Dendritic cell treated with granulocyte-macrophage colony-stimulating factor and Interleukin-4, amounts not matched to agents 40 ng/mL and 50 ng/mL, for 4 days (primary cell): ENCODE measurements at regions of chr2 and their contacts with region 1.

Region 1: DNA sequence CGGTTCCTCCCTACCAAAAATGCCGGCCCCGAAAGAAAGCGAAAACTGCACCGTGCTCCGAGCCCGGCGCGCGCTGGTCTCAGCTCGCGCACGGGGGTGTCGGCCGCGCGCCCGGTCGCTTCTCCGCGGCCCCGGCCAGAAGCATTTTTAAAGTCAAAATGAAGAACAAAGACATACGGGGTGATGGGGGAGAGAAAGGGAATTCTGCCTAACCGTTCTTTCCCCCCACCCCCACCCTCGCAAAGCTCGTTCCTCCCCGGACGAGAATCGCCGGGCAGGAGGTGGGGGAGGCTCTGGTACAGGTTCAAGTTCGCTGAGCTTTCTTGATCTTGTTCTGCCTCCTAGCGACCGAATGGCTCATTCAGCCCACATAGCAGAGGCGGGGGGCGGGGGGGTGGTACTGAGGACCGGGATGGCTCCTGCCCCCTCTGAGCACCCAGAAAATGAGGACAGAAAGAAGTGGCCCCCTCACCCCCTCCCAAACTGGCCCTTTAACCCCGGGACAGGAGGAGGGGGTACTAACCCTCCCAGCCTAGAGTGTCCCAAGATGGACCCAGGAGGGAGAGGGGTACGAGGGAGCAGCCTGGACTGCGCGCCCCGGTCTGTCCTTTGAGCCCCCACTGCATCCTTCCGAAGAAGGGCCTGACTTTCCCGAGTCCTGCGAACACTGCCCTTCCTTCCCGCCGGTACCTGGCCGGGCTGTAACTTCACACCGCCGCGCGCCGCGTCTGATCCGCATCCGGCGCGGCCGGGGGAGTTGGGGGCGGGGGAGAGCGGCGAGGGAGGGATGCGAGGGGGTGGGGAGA is 3.1 kb downstream of the BCL11A start:
- H3K4me3 Mint-ChIP-seq: peak overlapping the region; percentile 94
- H3K27ac Mint-ChIP-seq: peak overlapping the region; percentile 88
- H3K4me1 Mint-ChIP-seq: peaks cover 47% of the 10 kb centered on the region
- H3K27me3 Mint-ChIP-seq: no peaks in the 10 kb centered on the region

Region 2: DNA sequence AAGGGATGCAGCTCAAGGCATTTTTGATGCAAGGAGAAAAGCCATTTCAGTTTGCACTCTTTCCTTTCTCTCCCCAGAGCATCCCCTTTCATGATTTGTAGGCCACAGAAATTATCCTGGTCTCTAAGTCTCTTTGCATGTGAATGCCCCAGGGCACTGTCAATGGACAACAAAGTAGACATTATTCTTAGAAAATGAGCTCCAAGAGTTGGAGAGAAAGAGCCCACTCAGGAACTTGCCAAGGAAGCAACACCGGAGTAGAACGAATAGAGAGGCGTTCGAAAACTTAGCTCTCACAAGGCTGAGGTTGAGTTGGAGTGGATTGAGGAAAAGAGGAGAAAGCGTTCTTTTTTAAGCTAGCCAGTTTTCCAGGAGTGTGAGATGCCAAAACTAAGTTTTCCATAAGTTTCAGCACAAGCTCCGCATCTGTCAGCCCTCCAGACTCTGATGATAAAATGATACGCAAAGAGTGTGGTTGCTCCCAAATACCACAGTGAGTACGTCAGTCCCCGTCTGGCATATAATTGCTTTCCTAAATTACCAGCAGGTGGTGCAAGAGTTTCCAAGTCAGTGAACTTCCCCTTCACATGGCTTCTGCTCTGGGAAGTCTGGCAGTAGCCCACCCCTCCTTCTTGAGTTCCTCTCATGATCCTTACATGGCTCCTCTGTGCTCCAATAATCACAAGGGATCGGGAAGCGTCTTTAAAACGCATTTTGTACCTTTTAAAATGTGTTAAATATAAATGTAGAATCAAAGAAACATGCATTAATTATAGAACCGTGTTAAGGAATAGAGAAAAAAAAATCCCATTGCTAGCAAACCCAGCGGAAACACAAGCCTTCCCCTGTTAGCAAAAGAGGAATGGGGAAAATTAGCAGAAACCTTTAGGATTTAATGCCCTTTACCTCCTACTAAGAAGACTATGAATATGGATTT is 1248.6 kb before region 1 on chr2:
- intact Hi-C with region 1: loop called (anchors 1 kb)
- H3K4me3 Mint-ChIP-seq: no peak overlapping the region
- H3K27ac Mint-ChIP-seq: no peak overlapping the region
- H3K4me1 Mint-ChIP-seq: no peaks in the 10 kb centered on the region
- H3K27me3 Mint-ChIP-seq: no peaks in the 10 kb centered on the region

Region 3: GRCh38 chr2:60337140-60337494 is 213.3 kb before region 1 on chr2:
- intact Hi-C with region 1: loop called (anchors 5 kb)
- H3K4me3 Mint-ChIP-seq: no peak overlapping the region
- H3K27ac Mint-ChIP-seq: peak overlapping the region; percentile 82
- H3K4me1 Mint-ChIP-seq: peaks cover 61% of the 10 kb centered on the region
- H3K27me3 Mint-ChIP-seq: peaks cover 3% of the 10 kb centered on the region

Region 4: GRCh38 chr2:60484133-60484645 is 66.2 kb before region 1 on chr2:
- intact Hi-C with region 1: loop called (anchors 5 kb)
- H3K4me3 Mint-ChIP-seq: peak overlapping the region; percentile 69
- H3K27ac Mint-ChIP-seq: peak overlapping the region; percentile 89
- H3K4me1 Mint-ChIP-seq: peaks cover 75% of the 10 kb centered on the region
- H3K27me3 Mint-ChIP-seq: no peaks in the 10 kb centered on the region